Gastrocnemius medialis (tissue), 4 donors: ENCODE measurements at regions of chr16 and their contacts with region 1.

Region 1: DNA sequence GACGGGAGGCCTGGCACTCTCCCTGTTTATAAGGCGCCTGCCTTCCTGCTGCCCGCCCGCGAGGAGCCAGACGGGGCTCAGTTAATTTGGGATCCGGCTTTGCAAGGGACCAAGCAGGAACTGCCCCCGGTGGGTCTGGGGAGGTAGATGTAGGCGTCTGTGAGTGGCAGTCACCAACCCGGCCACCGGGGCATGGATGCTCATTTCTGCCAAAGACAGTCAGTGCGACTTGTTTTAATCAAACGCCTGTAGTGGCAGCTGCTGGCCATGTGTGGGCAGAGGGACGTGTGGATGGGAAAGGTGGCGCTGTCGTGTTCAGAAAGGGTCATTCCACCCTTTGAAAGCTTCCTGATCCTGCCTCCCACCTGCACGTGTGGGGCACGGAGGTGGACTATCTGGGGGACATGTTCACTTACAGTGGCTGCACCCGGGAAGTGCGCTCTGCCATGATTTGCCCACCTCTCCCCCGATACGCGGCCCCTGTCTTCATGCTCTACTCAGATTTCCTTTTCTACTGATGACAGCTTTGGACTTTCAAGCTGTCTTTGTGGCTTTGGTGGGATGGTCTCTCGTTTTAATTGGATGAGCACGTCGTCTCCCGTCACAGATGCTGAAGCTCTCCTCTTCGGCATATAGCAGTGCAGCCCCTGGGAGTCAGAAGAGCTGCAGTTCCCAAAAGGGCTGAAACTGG is 60.3 kb upstream of the CIBAR2 start:
- DNase-seq: peak in 1 of 2 donors; percentile 81
- ATAC-seq: peak; percentile 37 to 54
- H3K4me3 ChIP-seq: peak overlapping the region; percentile 49 to 66 (median 56)
- H3K27ac ChIP-seq: peak overlapping the region; percentile 72 to 75 (median 74)
- H3K4me1 ChIP-seq: peaks cover 52 to 65% of the 10 kb centered on the region in 2 donors
- H3K27me3 ChIP-seq: no peaks in the 10 kb centered on the region
- CTCF ChIP-seq: peak in 4 of 5 experiments; percentile 55 to 67 (median 64)
- POLR2A ChIP-seq: no peak

Region 2: GRCh38 chr16:85114909-85115567 is 57.6 kb before region 1 on chr16:
- in situ Hi-C with region 1: loop called in 2 of 4 experiments (anchors 5 kb)
- intact Hi-C with region 1: loop called (anchors 1 kb)
- DNase-seq: peak; percentile 77 to 89
- ATAC-seq: peak; percentile 93 to 97
- H3K4me3 ChIP-seq: peak overlapping the region in 1 of 4 donors; percentile 40
- H3K27ac ChIP-seq: peak overlapping the region; percentile 25 to 76 (median 70)
- H3K4me1 ChIP-seq: peaks cover 4 to 5% of the 10 kb centered on the region in 2 donors
- H3K27me3 ChIP-seq: no peaks in the 10 kb centered on the region
- CTCF ChIP-seq: peak; percentile 97 to 99 (median 99)
- POLR2A ChIP-seq: no peak

Region 3: GRCh38 chr16:85126705-85127419 is 45.7 kb before region 1 on chr16:
- in situ Hi-C with region 1: no loop called
- intact Hi-C with region 1: loop called (anchors 2 kb)
- DNase-seq: peak; percentile 78 to 89
- ATAC-seq: peak; percentile 47 to 62
- H3K4me3 ChIP-seq: peak overlapping the region; percentile 2 to 27 (median 14)
- H3K27ac ChIP-seq: peak overlapping the region; percentile 89 to 98 (median 92)
- H3K4me1 ChIP-seq: peaks cover 48 to 57% of the 10 kb centered on the region in 2 donors
- H3K27me3 ChIP-seq: no peaks in the 10 kb centered on the region
- CTCF ChIP-seq: peak in 1 of 5 experiments; percentile 22
- POLR2A ChIP-seq: peak in 1 of 2 donors; percentile 21

Region 4: GRCh38 chr16:85210423-85211169 is 38.0 kb after region 1 on chr16:
- in situ Hi-C with region 1: no loop called
- intact Hi-C with region 1: loop called (anchors 2 kb)
- DNase-seq: no peak
- ATAC-seq: no peak
- H3K4me3 ChIP-seq: no peak overlapping the region
- H3K27ac ChIP-seq: peak overlapping the region in 2 of 4 donors; percentile 61 to 88
- H3K4me1 ChIP-seq: peaks cover 67 to 91% of the 10 kb centered on the region in 2 donors
- H3K27me3 ChIP-seq: no peaks in the 10 kb centered on the region
- CTCF ChIP-seq: no peak
- POLR2A ChIP-seq: no peak